ENCODE measurements at regions of chr17 and their contacts with region 1.

Region 1: GRCh38 chr17:82551779-82552457 is 32.4 kb downstream of the FOXK2 start:
- DNase-seq: peak; percentile 70
- ATAC-seq: peak; percentile 93
- H3K4me3 ChIP-seq: no peak overlapping the region
- H3K27ac ChIP-seq: no peak overlapping the region
- H3K4me1 ChIP-seq: peaks cover 4% of the 10 kb centered on the region
- H3K27me3 ChIP-seq: no peaks in the 10 kb centered on the region
- CTCF ChIP-seq: peak; percentile 84
- POLR2A ChIP-seq: no peak
- RAD21 ChIP-seq: peak; percentile 86

Region 2: GRCh38 chr17:82457997-82458864 is 93.7 kb before region 1 on chr17 and contains the start of gene NARF:
- CTCF ChIA-PET with region 1: no interaction called
- POLR2A ChIA-PET with region 1: no interaction called
- dilution Hi-C with region 1: no loop called
- in situ Hi-C with region 1: no loop called
- intact Hi-C with region 1: loop called (anchors 5 kb)
- DNase-seq: peak; percentile 98
- ATAC-seq: peak; percentile 99
- H3K4me3 ChIP-seq: peak within 1 kb of the TSS; percentile 74
- H3K27ac ChIP-seq: peak within 1 kb of the TSS; percentile 86
- H3K4me1 ChIP-seq: peaks cover 3% of the 10 kb centered on the region
- H3K27me3 ChIP-seq: no peaks in the 10 kb centered on the region
- CTCF ChIP-seq: no peak
- POLR2A ChIP-seq: peak; percentile 98
- RAD21 ChIP-seq: no peak
- total RNA-seq, gene NARF: 70.8 and 83.7 TPM in 2 replicates

Measured in IMR-90 (cell line).